Right cardiac atrium (tissue), 5 donors: ENCODE measurements at regions of chr13 and their contacts with region 1.

Region 1: GRCh38 chr13:66237411-66238062 is 992.6 kb downstream of the PCDH9 start:
- DNase-seq: no peak
- ATAC-seq: no peak
- H3K4me3 ChIP-seq: no peak overlapping the region
- H3K27ac ChIP-seq: no peak overlapping the region
- H3K4me1 ChIP-seq: no peaks in the 10 kb centered on the region
- H3K27me3 ChIP-seq: no peaks in the 10 kb centered on the region

Region 2: DNA sequence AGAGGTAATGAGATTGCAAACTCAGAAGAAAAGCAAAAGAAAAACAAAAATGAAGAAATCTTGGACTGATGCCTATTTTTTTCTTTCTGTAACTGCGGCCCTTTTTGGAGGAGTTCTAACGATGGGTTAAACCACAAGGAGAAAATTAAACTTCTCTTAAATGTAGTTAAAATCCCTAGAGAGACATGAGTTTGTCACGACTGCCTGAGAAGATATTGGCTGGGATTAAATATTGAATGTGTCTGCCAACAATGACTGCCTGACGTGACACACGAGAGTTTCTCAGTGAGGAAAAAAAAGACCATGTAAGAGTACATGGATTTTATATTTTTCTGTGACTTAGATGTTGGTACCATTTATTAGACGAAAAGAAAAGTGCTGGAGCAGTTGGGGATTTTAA is 20.8 kb before region 1 on chr13:
- intact Hi-C with region 1: loop called in 1 of 4 experiments (anchors 2 kb)
- DNase-seq: no peak
- ATAC-seq: no peak
- H3K4me3 ChIP-seq: no peak overlapping the region
- H3K27ac ChIP-seq: no peak overlapping the region
- H3K4me1 ChIP-seq: no peaks in the 10 kb centered on the region
- H3K27me3 ChIP-seq: no peaks in the 10 kb centered on the region

Region 3: DNA sequence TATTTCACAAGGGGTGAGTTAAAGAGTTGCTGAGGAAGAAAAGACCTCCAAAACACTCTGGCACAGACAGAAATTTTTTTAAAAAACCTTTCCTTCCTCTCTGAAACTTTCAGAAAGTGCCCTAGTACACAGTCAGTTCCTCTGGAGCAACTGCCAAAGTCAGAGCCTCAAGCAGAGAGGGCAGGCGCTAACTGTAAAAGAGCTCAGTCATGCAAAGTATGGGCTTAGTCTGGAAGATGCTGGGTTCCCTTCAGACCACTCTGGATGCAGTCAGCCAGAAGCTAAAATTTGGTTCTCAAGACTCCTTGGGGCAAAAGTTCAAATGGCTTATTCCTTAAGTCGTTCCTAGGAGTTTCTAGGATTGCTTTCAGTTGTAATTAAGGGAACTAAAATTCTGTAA is 321.0 kb after region 1 on chr13:
- intact Hi-C with region 1: no loop called
- DNase-seq: peak in 1 of 3 donors; percentile 32
- ATAC-seq: peak in 1 of 2 donors; percentile 65
- H3K4me3 ChIP-seq: no peak overlapping the region
- H3K27ac ChIP-seq: no peak overlapping the region
- H3K4me1 ChIP-seq: no peaks in the 10 kb centered on the region
- H3K27me3 ChIP-seq: no peaks in the 10 kb centered on the region